ENCODE measurements at regions of chr15 and their contacts with region 1.

Region 1: GRCh38 chr15:89430530-89431341 is 65.6 kb downstream of the RHCG start:
- DNase-seq: peak; percentile 92
- H3K4me3 Mint-ChIP-seq: peak overlapping the region; percentile 70
- H3K27ac Mint-ChIP-seq: no peak overlapping the region
- H3K4me1 Mint-ChIP-seq: peaks cover 4% of the 10 kb centered on the region
- H3K27me3 Mint-ChIP-seq: peaks cover 12% of the 10 kb centered on the region

Region 2: DNA sequence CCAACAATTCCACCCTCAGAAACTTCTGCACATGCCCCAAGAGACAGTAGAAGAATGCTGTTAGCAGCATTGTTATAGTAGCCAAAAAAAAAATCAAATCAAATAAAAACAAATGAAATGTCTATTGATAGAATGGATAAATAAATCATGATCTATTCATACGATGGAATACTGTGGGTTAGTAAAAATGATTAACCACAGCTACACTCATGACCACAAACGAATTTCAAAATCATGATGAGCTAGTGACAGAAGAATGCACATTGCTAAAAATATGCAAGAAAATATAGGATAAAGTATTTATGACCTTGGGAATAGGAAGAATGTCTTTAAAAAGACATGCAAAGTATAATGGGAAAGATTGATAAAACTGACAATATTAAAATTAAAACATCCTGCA is 685.0 kb before region 1 on chr15:
- CTCF ChIA-PET with region 1: no interaction called
- intact Hi-C with region 1: no loop called
- DNase-seq: no peak
- H3K4me3 Mint-ChIP-seq: no peak overlapping the region
- H3K27ac Mint-ChIP-seq: no peak overlapping the region
- H3K4me1 Mint-ChIP-seq: no peaks in the 10 kb centered on the region
- H3K27me3 Mint-ChIP-seq: peaks cover 12% of the 10 kb centered on the region

Region 3: DNA sequence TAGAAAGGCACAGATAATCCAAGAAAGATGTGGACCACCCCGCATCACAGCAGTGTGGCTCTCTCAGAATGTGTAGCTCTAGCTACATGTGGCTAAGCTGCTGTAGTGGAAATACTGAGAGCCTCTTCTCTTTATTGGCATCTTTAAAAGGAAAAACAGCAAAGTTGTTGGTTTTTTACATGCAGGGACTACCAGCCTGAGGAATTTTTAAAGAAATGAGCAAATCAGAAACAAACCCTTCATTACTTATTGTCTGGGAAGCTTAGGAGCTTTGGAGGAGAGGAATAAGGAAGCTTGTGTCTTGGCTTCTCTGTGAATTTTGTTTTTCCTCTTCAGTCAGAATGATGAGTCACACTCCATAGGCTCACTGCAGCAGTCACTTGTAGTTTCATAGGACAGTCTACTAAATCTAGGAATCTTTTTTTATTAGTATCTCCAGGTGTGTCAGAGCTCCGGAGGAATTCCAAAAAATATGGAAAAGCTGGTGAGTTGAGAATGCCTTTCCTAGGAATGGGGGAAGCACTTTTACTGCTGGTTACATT is 123.6 kb before region 1 on chr15:
- CTCF ChIA-PET with region 1: no interaction called
- intact Hi-C with region 1: no loop called
- DNase-seq: no peak
- H3K4me3 Mint-ChIP-seq: no peak overlapping the region
- H3K27ac Mint-ChIP-seq: no peak overlapping the region
- H3K4me1 Mint-ChIP-seq: peaks cover 6% of the 10 kb centered on the region
- H3K27me3 Mint-ChIP-seq: no peaks in the 10 kb centered on the region

Region 4: GRCh38 chr15:89472785-89473256 is 42.1 kb after region 1 on chr15:
- CTCF ChIA-PET with region 1: interaction called, 4 read pairs
- intact Hi-C with region 1: loop called (anchors 1 kb)
- DNase-seq: peak; percentile 63
- H3K4me3 Mint-ChIP-seq: no peak overlapping the region
- H3K27ac Mint-ChIP-seq: no peak overlapping the region
- H3K4me1 Mint-ChIP-seq: peaks cover 2% of the 10 kb centered on the region
- H3K27me3 Mint-ChIP-seq: peaks cover 10% of the 10 kb centered on the region